AG04450 (cell line): ENCODE measurements at regions of chr4 and their contacts with region 1.

Region 1: GRCh38 chr4:106584337-106584989 is 215.9 kb upstream of the GIMD1 start:
- DNase-seq: no peak
- H3K4me3 ChIP-seq: no peak overlapping the region
- H3K27ac ChIP-seq: no peak overlapping the region
- H3K27me3 ChIP-seq: no peaks in the 10 kb centered on the region
- CTCF ChIP-seq: no peak

Region 2: GRCh38 chr4:106507440-106507839 is 77.0 kb before region 1 on chr4:
- CTCF ChIA-PET with region 1: no interaction called
- POLR2A ChIA-PET with region 1: no interaction called
- DNase-seq: no peak
- H3K4me3 ChIP-seq: no peak overlapping the region
- H3K27ac ChIP-seq: no peak overlapping the region
- H3K27me3 ChIP-seq: no peaks in the 10 kb centered on the region
- CTCF ChIP-seq: no peak

Region 3: DNA sequence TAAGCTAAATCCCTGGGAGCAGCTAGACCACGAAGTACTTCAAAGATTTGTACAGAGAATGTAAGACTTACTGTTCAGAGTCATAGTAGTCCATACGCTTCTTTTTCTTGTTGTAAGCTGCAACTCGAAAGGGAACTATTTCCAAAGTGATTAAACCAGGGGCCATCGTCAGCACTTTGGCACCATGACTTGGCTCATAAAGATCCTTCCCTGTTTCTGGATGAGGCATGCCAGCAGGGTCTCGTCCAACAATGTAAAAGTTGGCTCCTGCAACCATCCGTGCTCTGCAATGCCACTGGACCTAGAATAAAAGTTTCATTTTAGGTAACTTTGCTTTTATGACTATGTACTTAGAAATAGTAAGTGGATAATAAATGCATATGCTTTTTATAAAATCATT is 1047.1 kb after region 1 on chr4:
- CTCF ChIA-PET with region 1: interaction called, 10 read pairs
- POLR2A ChIA-PET with region 1: no interaction called
- DNase-seq: no peak
- H3K4me3 ChIP-seq: no peak overlapping the region
- H3K27ac ChIP-seq: no peak overlapping the region
- H3K27me3 ChIP-seq: no peaks in the 10 kb centered on the region
- CTCF ChIP-seq: no peak